ENCODE measurements at regions of chr4 and their contacts with region 1.

Region 1: DNA sequence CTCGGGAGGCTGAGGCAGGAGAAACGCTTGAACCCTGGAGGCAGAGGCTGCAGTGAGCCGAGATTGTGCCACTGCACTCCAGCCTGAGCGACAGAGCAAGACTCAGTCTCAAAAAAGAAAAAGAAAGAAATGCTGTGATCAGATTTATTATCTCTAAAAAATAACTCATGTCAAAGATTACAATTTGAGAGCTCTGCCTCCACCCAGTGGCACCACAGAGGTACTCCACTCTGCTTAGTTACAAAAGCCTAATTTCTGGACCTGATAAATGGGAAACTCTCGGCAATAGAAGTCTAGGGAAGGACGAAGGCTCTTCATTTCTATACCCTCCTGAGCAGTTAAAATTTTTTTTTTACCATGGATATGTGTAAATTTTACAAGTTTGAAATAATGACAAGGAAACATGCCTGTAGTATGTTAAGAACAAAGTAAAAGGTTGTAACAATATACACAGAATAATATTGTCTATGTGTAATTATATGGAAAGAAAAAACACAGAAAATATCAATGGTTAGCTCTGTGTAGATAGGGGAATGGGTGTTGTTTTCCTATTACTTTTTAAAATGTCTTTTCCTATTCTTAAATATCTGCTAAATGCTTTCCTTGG is 149.8 kb downstream of the STIM2 start:
- DNase-seq: peak; percentile 75
- ATAC-seq: peak; percentile 72
- H3K4me3 ChIP-seq: no peak overlapping the region
- H3K27ac ChIP-seq: peak overlapping the region; percentile 48; the same call in 1 of the 2 replicates
- H3K4me1 ChIP-seq: peaks cover 10% of the 10 kb centered on the region
- H3K27me3 ChIP-seq: no peaks in the 10 kb centered on the region
- CTCF ChIP-seq: peak; percentile 82
- POLR2A ChIP-seq: no peak
- RAD21 ChIP-seq: peak; percentile 87

Region 2: DNA sequence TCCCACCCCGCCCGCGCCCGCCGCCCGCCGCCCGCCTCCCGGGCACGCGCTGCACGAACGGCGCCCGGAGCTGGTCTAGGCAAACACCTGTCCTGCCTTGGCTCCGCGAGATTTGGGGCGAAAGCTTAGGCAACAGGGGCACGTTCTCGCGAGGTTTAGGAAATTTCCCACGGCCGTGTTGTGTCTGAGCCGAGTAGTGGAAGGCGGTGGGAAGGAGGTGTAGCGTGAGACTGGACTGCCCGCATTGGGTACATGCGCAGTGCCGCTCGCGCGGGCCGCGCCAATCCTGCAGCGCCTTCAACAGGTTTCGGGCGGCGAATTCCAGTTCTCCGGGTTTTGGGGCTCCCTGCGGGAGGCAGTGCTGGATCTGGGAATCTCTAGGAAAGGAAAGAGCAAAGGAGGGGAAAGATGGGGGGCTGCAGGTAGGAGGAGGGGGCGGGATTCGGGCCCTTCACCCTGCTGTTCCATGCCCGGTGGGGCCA is 690.9 kb before region 1 on chr4:
- CTCF ChIA-PET with region 1: no interaction called
- POLR2A ChIA-PET with region 1: no interaction called
- dilution Hi-C with region 1: no loop called
- in situ Hi-C with region 1: no loop called
- intact Hi-C with region 1: loop called (anchors 2 kb)
- DNase-seq: peak; percentile 100
- ATAC-seq: peak; percentile 69
- H3K4me3 ChIP-seq: peak overlapping the region; percentile 100
- H3K27ac ChIP-seq: peak overlapping the region; percentile 74
- H3K4me1 ChIP-seq: no peaks in the 10 kb centered on the region
- H3K27me3 ChIP-seq: no peaks in the 10 kb centered on the region
- CTCF ChIP-seq: peak; percentile 27
- POLR2A ChIP-seq: peak; percentile 37; the same call in 1 of the 2 replicates
- RAD21 ChIP-seq: peak; percentile 32; the same call in 1 of the 2 replicates

Region 3: DNA sequence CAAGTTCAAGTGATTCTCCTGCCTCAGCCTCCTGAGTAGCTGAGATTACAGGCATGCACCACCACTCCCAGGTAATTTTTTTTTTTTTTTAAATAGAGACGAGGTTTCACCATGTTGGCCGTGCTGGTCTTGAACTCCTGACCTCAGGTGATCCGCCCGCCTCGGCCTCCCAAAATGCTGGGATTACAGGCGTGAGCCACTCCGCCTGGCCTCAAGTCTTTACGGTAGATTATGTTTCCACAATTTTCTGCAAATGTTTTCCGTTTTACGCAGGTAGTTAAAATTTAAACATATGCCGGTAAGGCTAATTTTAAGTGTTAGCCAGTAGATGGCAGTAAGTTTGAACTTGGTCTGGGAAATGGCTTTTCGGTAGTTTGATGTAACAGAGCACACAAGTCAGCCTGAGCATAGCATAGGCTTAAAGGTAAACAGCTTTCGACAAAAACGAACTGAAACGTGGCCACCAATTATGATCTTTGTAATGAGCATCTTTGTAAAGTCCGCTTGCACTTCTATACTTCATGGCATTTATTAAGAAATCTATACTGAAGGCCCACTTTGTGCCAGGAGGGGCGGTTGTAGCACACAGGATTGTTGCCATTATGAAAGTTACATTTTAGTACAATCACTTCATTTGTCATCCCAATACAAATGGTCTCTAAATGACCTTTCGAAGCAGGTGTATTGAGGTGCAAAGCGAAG is 551.2 kb before region 1 on chr4:
- CTCF ChIA-PET with region 1: no interaction called
- POLR2A ChIA-PET with region 1: no interaction called
- dilution Hi-C with region 1: no loop called
- in situ Hi-C with region 1: loop called (anchors 25 kb)
- intact Hi-C with region 1: loop called (anchors 1 kb)
- DNase-seq: peak; percentile 86
- ATAC-seq: peak; percentile 53
- H3K4me3 ChIP-seq: no peak overlapping the region
- H3K27ac ChIP-seq: peak overlapping the region; percentile 82; the same call in 1 of the 2 replicates
- H3K4me1 ChIP-seq: peaks cover 22% of the 10 kb centered on the region
- H3K27me3 ChIP-seq: no peaks in the 10 kb centered on the region
- CTCF ChIP-seq: peak; percentile 65
- POLR2A ChIP-seq: no peak
- RAD21 ChIP-seq: peak; percentile 73

Region 4: DNA sequence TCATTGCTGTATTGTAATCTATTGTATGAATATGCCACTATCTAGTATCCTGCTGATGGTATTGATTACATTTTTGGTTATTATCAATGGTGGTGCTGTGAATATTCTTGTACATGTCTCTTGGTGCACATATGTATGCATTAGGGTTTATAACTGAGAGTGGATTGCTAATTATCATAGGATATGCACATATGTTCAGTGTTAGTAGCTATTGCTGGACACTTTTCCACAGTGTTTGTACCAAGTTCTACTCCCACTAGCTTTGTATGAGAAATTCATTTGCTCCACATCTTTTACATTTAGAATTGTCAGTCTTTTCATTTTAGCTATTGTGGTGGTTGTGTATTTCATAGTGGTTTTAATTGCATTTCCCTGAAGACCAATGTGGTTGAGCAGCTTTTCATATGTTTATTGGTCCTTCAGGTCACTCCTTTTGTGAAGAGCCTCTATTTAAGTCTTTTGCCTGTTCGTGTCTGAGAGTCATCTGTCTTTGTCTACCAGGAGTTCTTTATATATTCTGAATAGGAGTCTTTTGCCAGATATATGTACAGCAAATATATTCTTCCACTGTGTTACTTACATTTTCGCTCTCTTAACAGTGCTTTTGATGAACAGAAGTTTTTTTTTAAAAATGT is 339.4 kb before region 1 on chr4:
- CTCF ChIA-PET with region 1: no interaction called
- POLR2A ChIA-PET with region 1: no interaction called
- dilution Hi-C with region 1: no loop called
- in situ Hi-C with region 1: no loop called
- intact Hi-C with region 1: loop called (anchors 5 kb)
- DNase-seq: no peak
- ATAC-seq: no peak
- H3K4me3 ChIP-seq: no peak overlapping the region
- H3K27ac ChIP-seq: no peak overlapping the region
- H3K4me1 ChIP-seq: no peaks in the 10 kb centered on the region
- H3K27me3 ChIP-seq: no peaks in the 10 kb centered on the region
- CTCF ChIP-seq: no peak
- POLR2A ChIP-seq: no peak
- RAD21 ChIP-seq: no peak

Region 5: DNA sequence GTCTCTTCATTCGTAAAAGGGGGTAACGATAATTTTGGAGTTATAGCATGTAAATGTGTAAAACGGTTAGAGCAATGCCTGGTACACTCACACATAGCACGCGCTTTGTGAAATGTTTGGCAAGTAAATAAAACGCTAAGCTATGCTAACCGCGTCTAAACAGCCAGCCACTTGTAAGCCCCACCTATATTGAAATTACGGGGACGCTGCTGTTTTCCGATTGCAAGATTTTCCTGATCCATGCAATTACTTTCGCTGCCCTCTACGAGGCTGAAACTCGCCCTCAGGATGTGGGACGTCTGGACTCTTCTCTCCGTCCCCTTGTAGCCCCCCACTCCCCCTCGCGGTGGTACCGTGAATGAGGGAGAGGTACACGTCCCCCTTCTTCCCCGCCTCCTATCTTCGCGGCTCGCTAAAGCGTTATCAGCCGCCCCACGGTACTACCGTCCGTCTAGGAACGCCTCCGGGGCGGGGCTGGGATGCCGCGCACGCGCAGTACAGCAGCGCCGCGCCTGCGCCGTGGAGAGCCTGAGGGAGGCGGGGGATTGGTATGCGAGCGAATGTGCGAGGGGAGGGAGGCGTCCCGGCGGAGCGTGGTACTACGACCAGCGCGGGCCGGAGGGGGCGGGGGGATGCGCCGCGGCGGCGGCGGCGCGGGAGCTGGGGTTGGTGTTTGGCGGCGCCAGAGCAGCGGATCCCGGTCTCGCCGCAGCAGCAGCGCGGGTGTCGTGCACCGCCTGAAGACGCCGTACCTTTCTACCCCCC is 150.1 kb before region 1 on chr4 and contains the start of gene STIM2:
- CTCF ChIA-PET with region 1: interaction called, 4 read pairs
- POLR2A ChIA-PET with region 1: interaction called, 3 read pairs
- dilution Hi-C with region 1: no loop called
- in situ Hi-C with region 1: no loop called
- intact Hi-C with region 1: loop called (anchors 1 kb)
- DNase-seq: peak; percentile 96
- ATAC-seq: peak; percentile 78
- H3K4me3 ChIP-seq: peak within 1 kb of the TSS; percentile 62
- H3K27ac ChIP-seq: peak within 1 kb of the TSS; percentile 62
- H3K4me1 ChIP-seq: peaks cover 8% of the 10 kb centered on the region; the same call in 1 of the 2 replicates
- H3K27me3 ChIP-seq: no peaks in the 10 kb centered on the region
- CTCF ChIP-seq: peak; percentile 44
- POLR2A ChIP-seq: peak; percentile 35; the same call in 1 of the 2 replicates
- RAD21 ChIP-seq: no peak
- total RNA-seq, gene STIM2: 24.2 and 27.6 TPM in 2 replicates

Region 6: GRCh38 chr4:27807207-27807606 is 796.8 kb after region 1 on chr4:
- CTCF ChIA-PET with region 1: no interaction called
- POLR2A ChIA-PET with region 1: no interaction called
- dilution Hi-C with region 1: no loop called
- in situ Hi-C with region 1: no loop called
- intact Hi-C with region 1: no loop called
- DNase-seq: peak; percentile 28
- ATAC-seq: peak; percentile 60
- H3K4me3 ChIP-seq: no peak overlapping the region
- H3K27ac ChIP-seq: no peak overlapping the region
- H3K4me1 ChIP-seq: no peaks in the 10 kb centered on the region
- H3K27me3 ChIP-seq: no peaks in the 10 kb centered on the region
- CTCF ChIP-seq: no peak
- POLR2A ChIP-seq: no peak
- RAD21 ChIP-seq: no peak